IMR-90 (cell line): ENCODE measurements at regions of chr10 and their contacts with region 1.

Region 1: GRCh38 chr10:21764466-21765189 is 230.6 kb downstream of the MLLT10 start:
- DNase-seq: no peak
- ATAC-seq: no peak
- H3K4me3 ChIP-seq: no peak overlapping the region
- H3K27ac ChIP-seq: no peak overlapping the region
- H3K4me1 ChIP-seq: no peaks in the 10 kb centered on the region
- H3K27me3 ChIP-seq: no peaks in the 10 kb centered on the region
- CTCF ChIP-seq: no peak
- POLR2A ChIP-seq: no peak
- RAD21 ChIP-seq: no peak

Region 2: DNA sequence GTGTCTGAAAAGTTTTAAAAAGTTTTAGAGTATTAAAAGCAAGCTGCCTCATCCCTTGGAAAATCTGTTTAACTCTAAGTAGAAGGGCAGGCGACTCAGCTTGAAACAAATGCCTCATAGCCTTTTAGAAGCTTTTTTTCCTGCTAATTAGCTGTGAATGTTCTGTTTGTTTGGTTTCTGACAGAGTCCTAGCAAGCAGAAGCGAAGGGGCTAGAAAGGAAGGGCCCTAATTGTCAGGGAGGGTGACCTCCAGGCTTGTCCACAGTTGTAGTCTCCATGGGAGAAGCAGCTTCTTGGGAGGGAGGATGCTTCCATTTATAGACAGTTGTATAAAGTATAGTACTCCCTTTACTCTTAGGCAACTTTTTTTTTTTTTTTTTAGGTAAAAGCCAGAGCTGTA is 148.0 kb after region 1 on chr10:
- CTCF ChIA-PET with region 1: no interaction called
- POLR2A ChIA-PET with region 1: no interaction called
- dilution Hi-C with region 1: no loop called
- in situ Hi-C with region 1: no loop called
- intact Hi-C with region 1: loop called (anchors 5 kb)
- DNase-seq: peak; percentile 2
- ATAC-seq: peak; percentile 67
- H3K4me3 ChIP-seq: no peak overlapping the region
- H3K27ac ChIP-seq: peak overlapping the region; percentile 7; the same call in 1 of the 2 replicates
- H3K4me1 ChIP-seq: peaks cover 2% of the 10 kb centered on the region
- H3K27me3 ChIP-seq: no peaks in the 10 kb centered on the region
- CTCF ChIP-seq: no peak
- POLR2A ChIP-seq: no peak
- RAD21 ChIP-seq: no peak